ENCODE measurements at regions of chr6 and their contacts with region 1.

Region 1: DNA sequence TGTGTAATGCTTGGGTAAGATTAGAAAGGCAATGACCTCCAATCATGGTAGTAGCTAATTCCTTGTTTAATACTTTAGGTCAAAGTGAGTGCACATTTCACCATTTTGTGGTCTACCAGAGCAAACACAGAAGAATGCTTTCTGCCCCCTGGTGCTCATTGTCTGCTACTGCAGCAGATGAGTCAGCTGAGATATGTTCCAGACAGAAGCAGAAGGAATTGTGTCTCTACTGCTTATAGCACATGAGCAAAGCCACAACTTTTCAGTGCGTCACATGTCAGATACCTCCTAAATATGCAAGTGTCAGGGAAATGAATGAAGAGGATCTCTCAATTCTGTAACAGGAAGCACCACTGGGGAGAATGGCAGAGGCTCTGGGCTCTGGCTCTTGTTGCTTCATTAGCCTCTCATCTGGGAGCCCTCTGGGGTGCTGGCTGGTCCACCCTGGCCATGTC is 308.9 kb downstream of the ALDH8A1 start:
- DNase-seq: peak; percentile 93
- H3K4me3 Mint-ChIP-seq: no peak overlapping the region
- H3K27ac Mint-ChIP-seq: no peak overlapping the region
- H3K4me1 Mint-ChIP-seq: peaks cover 26% of the 10 kb centered on the region
- H3K27me3 Mint-ChIP-seq: peaks cover 9% of the 10 kb centered on the region

Region 2: DNA sequence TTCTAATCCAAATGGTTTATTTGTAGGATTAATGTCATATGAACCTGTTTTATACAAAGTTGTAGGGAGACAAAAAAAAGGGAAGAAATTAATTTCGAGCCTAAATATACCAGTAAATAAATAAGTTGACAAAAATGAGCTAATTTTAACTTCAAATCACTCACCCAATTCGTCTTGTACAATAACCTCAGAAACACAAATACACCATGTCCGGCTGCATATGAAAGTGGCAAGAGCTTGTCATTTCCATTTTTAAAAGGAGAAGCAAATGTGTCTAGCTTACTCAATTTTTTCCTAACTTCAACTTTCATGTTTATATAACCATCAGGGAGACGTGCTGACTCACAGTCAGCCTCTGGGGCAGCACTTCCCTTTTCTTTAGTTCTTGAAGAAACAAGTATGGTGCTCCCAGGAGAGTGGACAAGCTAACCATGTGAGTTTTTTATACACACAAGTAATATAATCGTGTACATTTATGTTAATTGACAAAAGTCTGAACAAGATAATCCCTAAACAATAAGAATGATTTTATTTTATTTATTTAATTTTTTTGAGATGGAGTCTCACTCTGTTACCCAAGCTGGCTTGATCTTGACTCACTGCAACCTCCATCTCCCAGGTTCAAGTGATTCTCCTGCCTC is 267.6 kb before region 1 on chr6:
- intact Hi-C with region 1: loop called (anchors 10 kb)
- DNase-seq: peak; percentile 70
- H3K4me3 Mint-ChIP-seq: peak overlapping the region; percentile 27
- H3K27ac Mint-ChIP-seq: peak overlapping the region; percentile 73
- H3K4me1 Mint-ChIP-seq: peaks cover 36% of the 10 kb centered on the region
- H3K27me3 Mint-ChIP-seq: no peaks in the 10 kb centered on the region

Region 3: GRCh38 chr6:134529921-134530320 is 111.1 kb before region 1 on chr6:
- intact Hi-C with region 1: loop called (anchors 10 kb)
- DNase-seq: peak; percentile 77
- H3K4me3 Mint-ChIP-seq: no peak overlapping the region
- H3K27ac Mint-ChIP-seq: no peak overlapping the region
- H3K4me1 Mint-ChIP-seq: peaks cover 44% of the 10 kb centered on the region
- H3K27me3 Mint-ChIP-seq: no peaks in the 10 kb centered on the region

Region 4: GRCh38 chr6:134741200-134741536 is 100.2 kb after region 1 on chr6:
- intact Hi-C with region 1: no loop called
- DNase-seq: no peak
- H3K4me3 Mint-ChIP-seq: no peak overlapping the region
- H3K27ac Mint-ChIP-seq: no peak overlapping the region
- H3K4me1 Mint-ChIP-seq: no peaks in the 10 kb centered on the region
- H3K27me3 Mint-ChIP-seq: peaks cover 37% of the 10 kb centered on the region

Region 5: GRCh38 chr6:134882426-134883038 is 241.5 kb after region 1 on chr6:
- intact Hi-C with region 1: loop called (anchors 5 kb)
- DNase-seq: peak; percentile 86
- H3K4me3 Mint-ChIP-seq: no peak overlapping the region
- H3K27ac Mint-ChIP-seq: no peak overlapping the region
- H3K4me1 Mint-ChIP-seq: no peaks in the 10 kb centered on the region
- H3K27me3 Mint-ChIP-seq: peaks cover 23% of the 10 kb centered on the region